Ascending aorta (tissue), 2 donors: ENCODE measurements at regions of chr20 and their contacts with region 1.

Region 1: GRCh38 chr20:59222253-59223181 is 58.9 kb downstream of the ZNF831 start:
- DNase-seq: peak in 1 of 2 donors; percentile 89
- H3K4me3 ChIP-seq: peak overlapping the region; percentile 63 to 66
- H3K27ac ChIP-seq: no peak overlapping the region
- H3K4me1 ChIP-seq: peaks cover 4 to 20% of the 10 kb centered on the region in 2 donors
- H3K27me3 ChIP-seq: no peaks in the 10 kb centered on the region
- CTCF ChIP-seq: peak; percentile 87 to 99 (median 97)

Region 2: DNA sequence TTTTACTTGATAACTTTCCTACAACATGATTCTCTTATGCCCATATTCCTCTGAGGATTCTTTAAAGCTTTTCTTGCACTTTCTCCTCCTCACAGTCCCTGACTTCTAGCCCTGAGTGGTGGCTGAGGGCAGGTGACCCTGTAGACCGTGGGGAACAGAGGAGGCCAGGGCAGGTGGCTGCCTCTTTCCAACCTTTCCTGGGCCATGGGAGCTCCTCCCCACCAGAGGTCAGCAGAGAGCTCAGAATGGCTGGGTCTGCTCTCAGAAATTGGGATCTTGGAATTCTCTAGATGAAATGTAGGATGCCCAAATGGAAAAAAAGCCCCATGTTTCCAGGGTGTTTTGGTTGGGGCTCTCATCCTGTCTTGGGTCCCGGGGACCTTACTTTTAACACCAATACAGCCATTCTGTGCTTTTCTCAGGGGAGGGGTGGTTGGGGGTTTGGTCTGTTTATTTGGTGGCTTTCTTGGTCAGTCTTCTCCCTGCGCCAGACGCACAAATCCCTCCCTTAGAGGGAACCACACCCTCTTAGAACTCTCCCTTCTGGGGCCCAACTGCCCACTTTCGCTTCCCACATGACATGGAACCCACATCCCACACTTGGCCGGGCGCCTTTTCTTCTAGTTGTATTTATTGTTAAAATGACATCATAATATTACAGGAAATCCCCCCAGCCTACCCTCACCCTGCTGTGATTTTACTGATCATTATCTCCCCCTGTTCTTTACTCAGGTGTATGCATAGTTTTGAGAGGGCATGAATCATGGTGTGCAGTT is 352.1 kb before region 1 on chr20:
- intact Hi-C with region 1: loop called (anchors 1 kb)
- DNase-seq: peak in 1 of 2 donors; percentile 84
- H3K4me3 ChIP-seq: no peak overlapping the region
- H3K27ac ChIP-seq: no peak overlapping the region
- H3K4me1 ChIP-seq: no peaks in the 10 kb centered on the region
- H3K27me3 ChIP-seq: no peaks in the 10 kb centered on the region
- CTCF ChIP-seq: peak; percentile 85 to 91 (median 88)

Region 3: GRCh38 chr20:59087829-59088433 is 134.6 kb before region 1 on chr20:
- intact Hi-C with region 1: loop called (anchors 1 kb)
- DNase-seq: peak in 1 of 2 donors; percentile 84
- H3K4me3 ChIP-seq: no peak overlapping the region
- H3K27ac ChIP-seq: no peak overlapping the region
- H3K4me1 ChIP-seq: peaks cover 0 to 5% of the 10 kb centered on the region in 2 donors
- H3K27me3 ChIP-seq: no peaks in the 10 kb centered on the region
- CTCF ChIP-seq: peak; percentile 63 to 85 (median 82)